CD4-positive, alpha-beta T cell (primary cell): ENCODE measurements at regions of chr21 and their contacts with region 1.

Region 1: GRCh38 chr21:31558962-31559367 is 100.5 kb upstream of the SOD1 start:
- DNase-seq: peak; percentile 81 to 95 (median 88)
- ATAC-seq: peak; percentile 85
- H3K4me3 ChIP-seq: peak overlapping the region; percentile 61
- H3K4me3 Mint-ChIP-seq: peak overlapping the region; percentile 90
- H3K27ac ChIP-seq: no peak overlapping the region
- H3K27ac Mint-ChIP-seq: peak overlapping the region; percentile 51
- H3K4me1 ChIP-seq: peaks cover 36% of the 10 kb centered on the region
- H3K4me1 Mint-ChIP-seq: peaks cover 43% of the 10 kb centered on the region
- H3K27me3 ChIP-seq: peaks cover 11 to 16% of the 10 kb centered on the region in 2 experiments
- H3K27me3 Mint-ChIP-seq: peaks cover 18% of the 10 kb centered on the region
- CTCF ChIP-seq: no peak

Region 2: GRCh38 chr21:31132574-31133242 is 426.3 kb before region 1 on chr21:
- CTCF ChIA-PET with region 1: no interaction called
- POLR2A ChIA-PET with region 1: interaction called, 23 read pairs
- intact Hi-C with region 1: no loop called
- DNase-seq: peak; percentile 52 to 92 (median 71)
- ATAC-seq: peak; percentile 91
- H3K4me3 ChIP-seq: peak overlapping the region; percentile 35
- H3K4me3 Mint-ChIP-seq: peak overlapping the region; percentile 68
- H3K27ac ChIP-seq: peak overlapping the region in 1 of 2 donors; percentile 43
- H3K27ac Mint-ChIP-seq: peak overlapping the region; percentile 79
- H3K4me1 ChIP-seq: peaks cover 33% of the 10 kb centered on the region
- H3K4me1 Mint-ChIP-seq: peaks cover 64% of the 10 kb centered on the region
- H3K27me3 ChIP-seq: no peaks in the 10 kb centered on the region
- H3K27me3 Mint-ChIP-seq: no peaks in the 10 kb centered on the region
- CTCF ChIP-seq: no peak

Region 3: GRCh38 chr21:31185663-31186062 is 373.3 kb before region 1 on chr21:
- CTCF ChIA-PET with region 1: interaction called, 4 read pairs
- POLR2A ChIA-PET with region 1: interaction called, 46 read pairs
- intact Hi-C with region 1: loop called (anchors 2 to 5 kb)
- DNase-seq: peak in 6 of 14 experiments; percentile 22 to 66 (median 50)
- ATAC-seq: peak; percentile 27
- H3K4me3 ChIP-seq: peak overlapping the region; percentile 56
- H3K4me3 Mint-ChIP-seq: peak overlapping the region; percentile 85
- H3K27ac ChIP-seq: peak overlapping the region; percentile 64 to 75
- H3K27ac Mint-ChIP-seq: peak overlapping the region; percentile 97
- H3K4me1 ChIP-seq: peaks cover 76% of the 10 kb centered on the region
- H3K4me1 Mint-ChIP-seq: peaks cover 85% of the 10 kb centered on the region
- H3K27me3 ChIP-seq: no peaks in the 10 kb centered on the region
- H3K27me3 Mint-ChIP-seq: no peaks in the 10 kb centered on the region
- CTCF ChIP-seq: no peak

Region 4: GRCh38 chr21:31397515-31397926 is 161.4 kb before region 1 on chr21:
- CTCF ChIA-PET with region 1: no interaction called
- POLR2A ChIA-PET with region 1: interaction called, 14 read pairs
- intact Hi-C with region 1: no loop called
- DNase-seq: no peak
- ATAC-seq: peak; percentile 8
- H3K4me3 ChIP-seq: no peak overlapping the region
- H3K4me3 Mint-ChIP-seq: peak overlapping the region; percentile 70
- H3K27ac ChIP-seq: no peak overlapping the region
- H3K27ac Mint-ChIP-seq: peak overlapping the region; percentile 90
- H3K4me1 ChIP-seq: peaks cover 36% of the 10 kb centered on the region
- H3K4me1 Mint-ChIP-seq: peaks cover 58% of the 10 kb centered on the region
- H3K27me3 ChIP-seq: no peaks in the 10 kb centered on the region
- H3K27me3 Mint-ChIP-seq: no peaks in the 10 kb centered on the region
- CTCF ChIP-seq: no peak

Region 5: DNA sequence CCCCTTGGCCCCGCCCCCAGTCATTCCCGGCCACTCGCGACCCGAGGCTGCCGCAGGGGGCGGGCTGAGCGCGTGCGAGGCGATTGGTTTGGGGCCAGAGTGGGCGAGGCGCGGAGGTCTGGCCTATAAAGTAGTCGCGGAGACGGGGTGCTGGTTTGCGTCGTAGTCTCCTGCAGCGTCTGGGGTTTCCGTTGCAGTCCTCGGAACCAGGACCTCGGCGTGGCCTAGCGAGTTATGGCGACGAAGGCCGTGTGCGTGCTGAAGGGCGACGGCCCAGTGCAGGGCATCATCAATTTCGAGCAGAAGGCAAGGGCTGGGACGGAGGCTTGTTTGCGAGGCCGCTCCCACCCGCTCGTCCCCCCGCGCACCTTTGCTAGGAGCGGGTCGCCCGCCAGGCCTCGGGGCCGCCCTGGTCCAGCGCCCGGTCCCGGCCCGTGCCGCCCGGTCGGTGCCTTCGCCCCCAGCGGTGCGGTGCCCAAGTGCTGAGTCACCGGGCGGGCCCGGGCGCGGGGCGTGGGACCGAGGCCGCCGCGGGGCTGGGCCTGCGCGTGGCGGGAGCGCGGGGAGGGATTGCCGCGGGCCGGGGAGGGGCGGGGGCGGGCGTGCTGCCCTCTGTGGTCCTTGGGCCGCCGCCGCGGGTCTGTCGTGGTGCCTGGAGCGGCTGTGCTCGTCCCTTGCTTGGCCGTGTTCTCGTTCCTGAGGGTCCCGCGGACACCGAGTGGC is 100.7 kb after region 1 on chr21 and contains the start of gene SOD1:
- CTCF ChIA-PET with region 1: no interaction called
- POLR2A ChIA-PET with region 1: interaction called, 3 read pairs
- intact Hi-C with region 1: loop called in 1 of 2 experiments (anchors 5 kb)
- DNase-seq: peak; percentile 95 to 98 (median 96)
- ATAC-seq: peak; percentile 91
- H3K4me3 ChIP-seq: peak within 1 kb of the TSS; percentile 89
- H3K4me3 Mint-ChIP-seq: peak within 1 kb of the TSS; percentile 100
- H3K27ac ChIP-seq: peak within 1 kb of the TSS; percentile 76 to 84
- H3K27ac Mint-ChIP-seq: peak within 1 kb of the TSS; percentile 85
- H3K4me1 ChIP-seq: peaks cover 54% of the 10 kb centered on the region
- H3K4me1 Mint-ChIP-seq: peaks cover 74% of the 10 kb centered on the region
- H3K27me3 ChIP-seq: no peaks in the 10 kb centered on the region
- H3K27me3 Mint-ChIP-seq: no peaks in the 10 kb centered on the region
- CTCF ChIP-seq: no peak
- total RNA-seq, gene SOD1: 158 to 161 TPM

Region 6: GRCh38 chr21:31686272-31686915 is 127.4 kb after region 1 on chr21:
- CTCF ChIA-PET with region 1: no interaction called
- POLR2A ChIA-PET with region 1: no interaction called
- intact Hi-C with region 1: no loop called
- DNase-seq: no peak
- ATAC-seq: no peak
- H3K4me3 ChIP-seq: no peak overlapping the region
- H3K4me3 Mint-ChIP-seq: no peak overlapping the region
- H3K27ac ChIP-seq: no peak overlapping the region
- H3K27ac Mint-ChIP-seq: no peak overlapping the region
- H3K4me1 ChIP-seq: no peaks in the 10 kb centered on the region
- H3K4me1 Mint-ChIP-seq: no peaks in the 10 kb centered on the region
- H3K27me3 ChIP-seq: no peaks in the 10 kb centered on the region
- H3K27me3 Mint-ChIP-seq: no peaks in the 10 kb centered on the region
- CTCF ChIP-seq: no peak